Spleen (tissue), 13 donors: ENCODE measurements at regions of chr17 and their contacts with region 1.

Region 1: GRCh38 chr17:35766903-35767510 is 6.3 kb downstream of the C17orf50 start:
- DNase-seq: no peak
- H3K4me3 ChIP-seq: no peak overlapping the region
- H3K27ac ChIP-seq: no peak overlapping the region
- H3K4me1 ChIP-seq: peaks cover 6 to 22% (median 15%) of the 10 kb centered on the region in 6 donors
- H3K27me3 ChIP-seq: peaks cover 0 to 4% (median 0%) of the 10 kb centered on the region in 7 donors
- CTCF ChIP-seq: peak in 9 of 11 experiments; percentile 16 to 57 (median 41)
- POLR2A ChIP-seq: no peak

Region 2: DNA sequence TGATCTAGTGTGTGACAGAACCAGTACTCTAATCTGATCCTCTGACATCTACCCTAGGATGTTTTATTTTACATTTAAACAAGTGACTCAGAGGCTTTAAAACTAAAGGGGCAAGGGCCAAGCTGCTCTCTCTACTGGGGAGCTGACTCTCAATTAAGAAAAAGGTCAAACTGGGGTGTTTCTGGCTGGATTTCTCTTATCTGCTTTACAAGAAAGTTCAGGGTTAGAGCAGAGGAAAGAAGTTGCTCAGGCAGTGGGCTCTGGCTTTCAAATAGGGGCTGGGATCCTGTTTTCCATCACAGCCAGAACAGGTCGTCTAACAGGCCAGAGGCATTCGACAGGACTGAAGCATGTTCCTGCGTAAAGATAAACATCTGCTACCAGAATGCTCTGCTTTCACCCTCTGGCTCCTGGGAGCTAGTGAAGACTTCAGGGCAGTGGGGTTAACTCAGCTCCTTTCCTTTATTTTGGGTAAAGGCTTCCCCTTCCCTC is 20.0 kb after region 1 on chr17:
- intact Hi-C with region 1: no loop called
- DNase-seq: no peak
- H3K4me3 ChIP-seq: no peak overlapping the region
- H3K27ac ChIP-seq: peak overlapping the region in 1 of 8 donors; percentile 22
- H3K4me1 ChIP-seq: peaks cover 4 to 36% (median 19%) of the 10 kb centered on the region in 6 donors
- H3K27me3 ChIP-seq: peaks cover 0 to 7% (median 0%) of the 10 kb centered on the region in 7 donors
- CTCF ChIP-seq: no peak
- POLR2A ChIP-seq: no peak

Region 3: DNA sequence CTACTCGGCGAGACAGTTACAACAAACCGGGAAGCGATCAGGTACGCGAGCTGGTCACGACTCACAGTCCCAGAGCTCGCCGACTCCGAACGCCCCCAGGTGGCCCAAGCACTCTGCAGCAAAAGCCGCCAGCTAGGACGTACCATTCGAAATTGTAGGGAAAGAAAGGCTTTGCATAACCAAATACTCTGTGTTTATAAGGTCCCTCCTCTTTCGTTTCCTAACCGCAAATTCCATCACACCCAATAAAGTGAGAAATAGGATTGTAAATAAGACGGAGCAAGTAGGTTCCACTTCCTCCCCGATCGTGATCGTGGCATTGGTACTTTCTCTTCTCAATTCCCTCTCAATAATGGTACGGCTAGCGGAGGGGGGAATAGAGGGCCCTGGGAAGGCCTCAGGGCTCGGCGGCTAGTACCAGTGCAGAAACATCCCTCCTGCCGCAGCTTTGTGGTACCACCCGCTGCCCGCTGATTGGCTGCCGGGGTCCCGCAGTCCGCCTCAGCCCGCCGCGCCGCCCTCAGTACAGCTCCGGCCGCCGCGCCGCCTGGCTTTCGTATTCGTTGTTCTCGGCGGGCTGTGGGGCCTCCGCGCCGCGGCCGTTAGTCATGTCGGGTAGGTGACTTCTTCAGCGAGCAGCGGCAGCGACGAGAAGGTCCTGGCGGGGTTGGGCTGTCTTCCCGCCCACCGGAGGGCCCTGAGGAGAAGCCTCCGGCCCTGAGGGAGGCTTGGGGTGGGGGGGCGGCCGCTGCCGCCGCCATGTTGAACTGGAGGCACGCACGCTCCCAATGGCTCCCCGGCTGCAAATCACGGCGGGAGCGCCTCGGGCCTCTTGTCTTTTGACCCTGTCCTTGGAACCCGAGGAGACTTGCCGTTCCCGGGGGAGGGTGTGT is 42.2 kb after region 1 on chr17 and contains the start of gene TAF15:
- intact Hi-C with region 1: loop called (anchors 5 kb)
- DNase-seq: peak; percentile 98
- H3K4me3 ChIP-seq: peak within 1 kb of the TSS; percentile 60 to 92 (median 85)
- H3K27ac ChIP-seq: peak within 1 kb of the TSS; percentile 91 to 98 (median 98)
- H3K4me1 ChIP-seq: peaks cover 32 to 82% (median 65%) of the 10 kb centered on the region in 6 donors
- H3K27me3 ChIP-seq: no peaks in the 10 kb centered on the region
- CTCF ChIP-seq: peak; percentile 53 to 83 (median 79)
- POLR2A ChIP-seq: peak; percentile 91 to 96 (median 96)
- total RNA-seq, gene TAF15: 78.7 to 184 (median 146) TPM